MCF 10A (cell line): ENCODE measurements at regions of chr6 and their contacts with region 1.

Region 1: GRCh38 chr6:30102970-30103874 is 9.7 kb downstream of the TRIM31 start:
- DNase-seq: peak; percentile 91
- H3K4me3 Mint-ChIP-seq: peak overlapping the region; percentile 70
- H3K27ac Mint-ChIP-seq: peak overlapping the region; percentile 84
- H3K4me1 Mint-ChIP-seq: peaks cover 35% of the 10 kb centered on the region
- H3K27me3 Mint-ChIP-seq: peaks cover 7% of the 10 kb centered on the region
- CTCF ChIP-seq: peak; percentile 85

Region 2: GRCh38 chr6:30061092-30061857 is 41.9 kb before region 1 on chr6 and contains the start of gene POLR1H:
- CTCF ChIA-PET with region 1: interaction called, 11 read pairs
- POLR2A ChIA-PET with region 1: interaction called, 83 read pairs
- intact Hi-C with region 1: loop called (anchors 2 kb)
- DNase-seq: peak; percentile 97
- H3K4me3 Mint-ChIP-seq: peak within 1 kb of the TSS; percentile 96
- H3K27ac Mint-ChIP-seq: peak within 1 kb of the TSS; percentile 92
- H3K4me1 Mint-ChIP-seq: peaks cover 12% of the 10 kb centered on the region
- H3K27me3 Mint-ChIP-seq: no peaks in the 10 kb centered on the region
- CTCF ChIP-seq: no peak
- total RNA-seq, gene POLR1H: 60.9 and 68.3 TPM in 2 replicates

Region 3: DNA sequence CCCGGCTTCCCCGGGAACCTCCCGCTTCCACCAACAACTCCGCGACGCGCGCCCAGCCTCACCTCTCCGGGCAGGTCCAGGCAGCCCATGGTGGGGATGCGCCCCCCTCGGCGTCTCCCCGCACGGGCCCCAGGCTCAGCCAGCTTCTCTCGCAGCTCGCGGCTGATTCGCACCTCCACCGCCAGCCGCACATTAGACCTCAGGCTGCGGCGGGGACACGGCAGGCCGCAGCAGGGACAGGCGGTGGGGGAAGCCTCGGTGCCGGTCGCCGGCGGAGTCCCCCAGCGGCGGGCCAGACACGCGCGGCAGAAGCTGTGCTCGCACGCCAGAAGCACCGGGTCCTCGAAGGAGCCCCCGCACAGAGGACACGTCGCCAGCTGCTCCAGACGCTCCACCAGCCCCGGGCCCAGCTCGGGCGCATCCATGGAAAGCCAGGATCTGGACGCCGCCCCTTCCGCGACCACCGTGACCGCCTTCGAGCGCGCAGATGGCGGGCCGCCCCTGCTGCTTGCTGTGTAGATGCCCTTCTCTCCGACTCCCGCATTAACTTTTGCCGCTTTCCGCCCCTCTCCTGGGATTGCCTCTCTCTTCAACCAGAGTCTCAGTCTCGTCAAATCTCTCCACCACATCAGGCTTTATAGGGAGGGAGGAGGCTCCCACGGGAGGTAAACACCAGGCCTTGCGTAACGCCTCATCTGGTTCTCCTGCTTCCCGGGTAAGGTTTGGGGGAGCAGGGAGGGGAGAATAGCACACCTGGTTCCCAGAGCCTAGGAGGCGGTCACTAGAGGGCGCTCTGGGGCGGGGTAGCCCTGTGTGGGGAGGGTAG is 27.8 kb before region 1 on chr6 and contains the start of gene RNF39:
- CTCF ChIA-PET with region 1: interaction called, 6 read pairs
- POLR2A ChIA-PET with region 1: interaction called, 64 read pairs
- intact Hi-C with region 1: no loop called
- DNase-seq: no peak
- H3K4me3 Mint-ChIP-seq: peak within 1 kb of the TSS; percentile 84
- H3K27ac Mint-ChIP-seq: peak within 1 kb of the TSS; percentile 85
- H3K4me1 Mint-ChIP-seq: peaks cover 39% of the 10 kb centered on the region
- H3K27me3 Mint-ChIP-seq: no peaks in the 10 kb centered on the region
- CTCF ChIP-seq: peak; percentile 57
- total RNA-seq, gene RNF39: 2.3 and 3.6 TPM in 2 replicates

Region 4: DNA sequence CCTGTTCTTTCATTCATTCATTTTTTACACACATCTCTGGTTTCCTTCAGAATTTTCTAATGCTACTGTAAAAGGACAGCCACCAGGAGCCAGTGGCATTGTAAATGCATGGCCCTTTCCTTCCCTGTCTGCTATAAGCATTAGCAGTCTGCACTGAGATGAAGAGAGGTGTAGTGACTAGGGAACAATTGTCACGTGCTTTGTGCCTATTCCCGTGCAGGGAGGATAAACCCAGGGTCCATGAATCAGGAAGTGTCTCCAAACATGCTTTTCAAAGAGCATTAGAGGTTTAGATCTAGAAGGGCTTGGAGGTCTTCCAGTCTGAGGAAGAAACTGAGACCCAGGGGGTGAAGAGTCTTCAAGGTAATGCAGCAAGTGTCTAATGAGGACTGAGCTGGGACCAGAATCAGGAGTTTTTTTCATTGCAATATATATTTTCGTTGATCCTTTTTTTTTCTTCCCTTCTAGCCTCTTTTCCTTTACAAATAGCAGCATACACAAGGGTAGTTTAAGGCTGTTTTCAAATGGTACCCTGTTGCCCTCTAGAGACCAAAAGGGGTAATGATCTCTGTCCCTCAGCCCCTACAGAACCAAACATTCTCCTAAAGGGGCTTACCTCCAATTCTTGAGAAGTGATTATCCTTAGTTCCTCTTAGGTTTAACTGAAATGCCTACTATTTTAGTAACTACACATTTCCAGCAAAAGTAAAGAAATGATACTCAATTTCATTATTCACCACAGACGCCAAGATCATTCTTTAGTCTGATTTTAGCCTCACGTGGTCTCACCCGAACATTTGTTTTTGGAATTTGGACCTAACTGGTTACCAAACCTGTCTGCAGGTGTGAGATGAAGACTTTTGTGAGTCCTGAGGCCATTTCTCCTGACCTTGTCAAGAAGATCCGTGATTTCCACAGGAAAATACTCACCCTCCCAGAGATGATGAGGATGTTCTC is 66.7 kb after region 1 on chr6:
- CTCF ChIA-PET with region 1: interaction called, 10 read pairs
- POLR2A ChIA-PET with region 1: interaction called, 7 read pairs
- intact Hi-C with region 1: loop called (anchors 1 kb)
- DNase-seq: peak; percentile 63
- H3K4me3 Mint-ChIP-seq: no peak overlapping the region
- H3K27ac Mint-ChIP-seq: no peak overlapping the region
- H3K4me1 Mint-ChIP-seq: no peaks in the 10 kb centered on the region
- H3K27me3 Mint-ChIP-seq: peaks cover 13% of the 10 kb centered on the region
- CTCF ChIP-seq: peak; percentile 81

Region 5: DNA sequence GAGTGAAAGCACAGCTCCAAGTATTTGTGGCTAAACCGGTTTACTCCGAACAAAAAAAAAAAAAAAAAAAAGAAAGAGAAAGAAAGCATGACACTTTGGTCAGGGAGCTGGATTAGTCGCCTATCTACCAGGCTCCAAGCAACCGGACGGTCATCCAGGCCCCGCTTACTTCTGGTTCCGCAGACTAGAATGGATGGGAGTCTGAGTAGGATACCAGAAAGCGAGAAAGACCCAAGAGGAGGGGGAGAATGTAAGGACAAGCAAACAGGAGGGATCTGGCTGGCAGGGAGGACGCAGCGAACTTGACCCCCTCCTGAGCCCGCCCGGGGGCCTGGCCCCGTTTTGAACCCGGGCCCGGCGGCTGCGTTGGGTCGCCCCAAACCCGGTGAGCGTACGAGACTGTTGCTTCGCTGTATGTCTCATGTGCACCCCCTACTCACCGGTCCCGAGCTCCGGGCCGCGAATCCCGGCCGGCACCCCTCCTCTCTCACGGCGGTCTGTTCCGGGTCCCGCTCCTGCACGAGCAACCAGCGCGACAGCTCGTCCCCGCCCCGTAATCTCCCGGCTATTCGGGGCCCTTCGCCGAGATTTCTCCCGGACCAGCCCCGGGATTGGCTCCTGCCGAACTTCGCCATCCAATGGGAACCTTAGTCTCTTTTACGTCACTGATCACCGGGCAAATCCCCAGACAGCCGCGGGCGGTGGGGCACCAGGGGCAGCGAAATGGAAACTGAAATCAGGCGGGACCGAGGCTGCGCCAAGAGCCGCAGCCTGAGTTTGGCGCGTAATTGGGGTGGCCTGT is 109.8 kb after region 1 on chr6 and contains the start of gene TRIM26:
- CTCF ChIA-PET with region 1: interaction called, 6 read pairs
- POLR2A ChIA-PET with region 1: interaction called, 28 read pairs
- intact Hi-C with region 1: loop called (anchors 2 kb)
- DNase-seq: peak; percentile 98
- H3K4me3 Mint-ChIP-seq: peak within 1 kb of the TSS; percentile 90
- H3K27ac Mint-ChIP-seq: peak within 1 kb of the TSS; percentile 96
- H3K4me1 Mint-ChIP-seq: peaks cover 34% of the 10 kb centered on the region
- H3K27me3 Mint-ChIP-seq: no peaks in the 10 kb centered on the region
- CTCF ChIP-seq: no peak
- total RNA-seq, gene TRIM26: 48.6 and 60.6 TPM in 2 replicates

Region 6: GRCh38 chr6:30272017-30272416 is 168.8 kb after region 1 on chr6:
- CTCF ChIA-PET with region 1: no interaction called
- POLR2A ChIA-PET with region 1: no interaction called
- intact Hi-C with region 1: no loop called
- DNase-seq: no peak
- H3K4me3 Mint-ChIP-seq: no peak overlapping the region
- H3K27ac Mint-ChIP-seq: no peak overlapping the region
- H3K4me1 Mint-ChIP-seq: no peaks in the 10 kb centered on the region
- H3K27me3 Mint-ChIP-seq: no peaks in the 10 kb centered on the region
- CTCF ChIP-seq: no peak

Region 7: GRCh38 chr6:30378290-30378937 is 275.2 kb after region 1 on chr6:
- CTCF ChIA-PET with region 1: no interaction called
- POLR2A ChIA-PET with region 1: no interaction called
- intact Hi-C with region 1: no loop called
- DNase-seq: peak; percentile 64
- H3K4me3 Mint-ChIP-seq: no peak overlapping the region
- H3K27ac Mint-ChIP-seq: no peak overlapping the region
- H3K4me1 Mint-ChIP-seq: no peaks in the 10 kb centered on the region
- H3K27me3 Mint-ChIP-seq: peaks cover 91% of the 10 kb centered on the region
- CTCF ChIP-seq: no peak